PC-3 (cell line): ENCODE measurements at regions of chr12 and their contacts with region 1.

Region 1: GRCh38 chr12:68406134-68406594 is 74.0 kb upstream of the MDM1 start:
- DNase-seq: peak; percentile 75
- ATAC-seq: peak; percentile 84
- H3K4me3 ChIP-seq: no peak overlapping the region
- H3K27ac ChIP-seq: no peak overlapping the region
- H3K4me1 ChIP-seq: peaks cover 23% of the 10 kb centered on the region
- H3K27me3 ChIP-seq: no peaks in the 10 kb centered on the region
- CTCF ChIP-seq: peak; percentile 62

Region 2: DNA sequence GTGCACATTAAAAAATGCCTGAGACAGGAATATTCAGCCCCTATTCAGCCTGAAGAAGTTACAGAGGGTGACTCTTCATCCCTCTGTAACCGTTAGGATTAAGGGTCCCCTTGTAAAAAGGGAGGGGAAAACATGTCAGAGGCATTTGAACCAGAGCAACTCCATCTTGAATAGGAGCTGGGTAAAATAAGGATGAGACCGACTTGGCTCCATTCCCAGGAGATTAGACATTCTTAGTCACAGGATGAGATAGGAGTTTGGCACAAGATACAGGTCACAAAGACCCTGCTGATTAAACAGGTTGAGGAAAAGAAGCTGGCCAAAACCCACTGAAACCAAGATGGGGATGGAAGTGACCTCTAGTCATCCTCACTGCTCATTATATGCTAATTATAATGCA is 54.1 kb before region 1 on chr12:
- CTCF ChIA-PET with region 1: no interaction called
- POLR2A ChIA-PET with region 1: no interaction called
- intact Hi-C with region 1: no loop called
- DNase-seq: peak; percentile 44
- ATAC-seq: no peak
- H3K4me3 ChIP-seq: no peak overlapping the region
- H3K27ac ChIP-seq: no peak overlapping the region
- H3K4me1 ChIP-seq: peaks cover 28% of the 10 kb centered on the region
- H3K27me3 ChIP-seq: no peaks in the 10 kb centered on the region
- CTCF ChIP-seq: no peak

Region 3: DNA sequence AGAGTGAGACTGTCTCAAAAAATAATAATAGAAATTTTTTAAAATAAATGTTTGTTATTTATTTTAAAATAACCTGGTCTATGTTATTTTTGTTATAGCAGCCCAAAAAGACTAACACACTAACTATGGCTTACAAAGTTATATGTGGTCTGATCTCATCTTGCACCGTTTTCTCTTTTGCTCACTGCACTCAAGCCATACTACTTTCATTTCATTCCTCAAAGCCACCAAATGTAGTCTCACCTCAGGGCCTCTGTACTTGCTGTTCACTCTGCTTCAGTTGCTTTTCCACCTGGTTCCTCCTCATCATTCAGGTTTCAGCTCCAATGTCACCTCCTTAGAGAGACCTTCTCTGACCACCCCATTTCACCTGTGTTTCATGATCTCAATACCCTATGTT is 18.8 kb before region 1 on chr12:
- CTCF ChIA-PET with region 1: no interaction called
- POLR2A ChIA-PET with region 1: interaction called, 13 read pairs
- intact Hi-C with region 1: no loop called
- DNase-seq: no peak
- ATAC-seq: no peak
- H3K4me3 ChIP-seq: no peak overlapping the region
- H3K27ac ChIP-seq: no peak overlapping the region
- H3K4me1 ChIP-seq: no peaks in the 10 kb centered on the region
- H3K27me3 ChIP-seq: no peaks in the 10 kb centered on the region
- CTCF ChIP-seq: no peak